Heart right ventricle (tissue), 16 donors: ENCODE measurements at regions of chr6 and their contacts with region 1.

Region 1: GRCh38 chr6:96604420-96604819 is 41.5 kb downstream of the FHL5 start:
- DNase-seq: no peak
- ATAC-seq: no peak
- H3K4me3 ChIP-seq: no peak overlapping the region
- H3K27ac ChIP-seq: peak overlapping the region in 1 of 10 donors; percentile 15
- H3K4me1 ChIP-seq: no peaks in the 10 kb centered on the region
- H3K27me3 ChIP-seq: peaks cover 0 to 6% (median 0%) of the 10 kb centered on the region in 7 donors
- CTCF ChIP-seq: no peak

Region 2: DNA sequence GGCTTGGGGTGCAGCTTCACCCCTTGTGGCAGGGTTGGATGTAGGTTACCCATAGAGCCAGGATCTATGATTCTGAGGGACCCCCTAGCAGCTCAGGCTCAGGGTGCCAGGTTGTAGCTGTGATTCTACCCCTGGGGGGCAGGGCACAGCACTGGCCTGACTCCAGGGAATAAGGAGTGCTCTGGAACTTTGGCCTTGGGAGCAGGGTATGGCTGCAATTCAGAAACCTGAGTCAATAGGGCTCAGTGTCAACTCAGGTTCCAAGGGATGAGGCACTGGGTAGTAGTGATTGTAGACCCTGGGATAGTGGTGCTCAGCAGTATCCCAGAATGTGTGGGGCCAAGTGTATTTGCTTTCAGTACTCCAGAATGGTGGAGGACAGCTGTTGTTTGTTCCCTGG is 32.9 kb before region 1 on chr6:
- intact Hi-C with region 1: no loop called
- DNase-seq: no peak
- ATAC-seq: no peak
- H3K4me3 ChIP-seq: no peak overlapping the region
- H3K27ac ChIP-seq: no peak overlapping the region
- H3K4me1 ChIP-seq: no peaks in the 10 kb centered on the region
- H3K27me3 ChIP-seq: peaks cover 0 to 3% (median 0%) of the 10 kb centered on the region in 7 donors
- CTCF ChIP-seq: no peak

Region 3: DNA sequence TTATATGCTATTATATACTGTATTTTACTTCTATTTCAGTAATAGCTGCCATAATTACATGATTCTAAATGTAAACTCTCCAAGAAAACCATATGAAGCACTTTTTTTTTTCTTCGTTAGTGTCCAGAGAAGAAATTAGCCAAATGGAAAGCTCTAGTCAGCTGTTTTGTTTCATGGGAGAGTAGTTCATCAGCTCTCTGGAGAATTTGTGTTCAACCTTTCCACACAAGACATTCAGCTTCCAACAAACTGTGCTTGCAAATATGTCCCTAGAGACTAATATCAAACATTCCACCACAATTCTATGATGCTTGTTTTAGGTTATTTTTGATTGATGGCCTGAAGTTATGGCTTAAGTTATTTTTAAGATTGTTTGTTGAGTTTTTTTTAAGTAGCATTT is 22.0 kb before region 1 on chr6:
- intact Hi-C with region 1: loop called in 1 of 10 experiments (anchors 2 kb)
- DNase-seq: no peak
- ATAC-seq: peak in 7 of 8 donors; percentile 20 to 82 (median 69)
- H3K4me3 ChIP-seq: no peak overlapping the region
- H3K27ac ChIP-seq: peak overlapping the region in 3 of 10 donors; percentile 38 to 53 (median 47)
- H3K4me1 ChIP-seq: no peaks in the 10 kb centered on the region
- H3K27me3 ChIP-seq: no peaks in the 10 kb centered on the region
- CTCF ChIP-seq: no peak